ENCODE measurements at regions of chr5 and their contacts with region 1.

Region 1: GRCh38 chr5:14644623-14645237 is 19.8 kb upstream of the OTULIN start:
- DNase-seq: no peak
- ATAC-seq: no peak
- H3K4me3 ChIP-seq: no peak overlapping the region
- H3K4me3 Mint-ChIP-seq: no peak overlapping the region
- H3K27ac ChIP-seq: no peak overlapping the region
- H3K27ac Mint-ChIP-seq: no peak overlapping the region
- H3K4me1 ChIP-seq: no peaks in the 10 kb centered on the region
- H3K4me1 Mint-ChIP-seq: peaks cover 0 to 8% (median 0%) of the 10 kb centered on the region in 7 donors
- H3K27me3 ChIP-seq: no peaks in the 10 kb centered on the region
- H3K27me3 Mint-ChIP-seq: peaks cover 5 to 42% (median 18%) of the 10 kb centered on the region in 5 donors

Region 2: DNA sequence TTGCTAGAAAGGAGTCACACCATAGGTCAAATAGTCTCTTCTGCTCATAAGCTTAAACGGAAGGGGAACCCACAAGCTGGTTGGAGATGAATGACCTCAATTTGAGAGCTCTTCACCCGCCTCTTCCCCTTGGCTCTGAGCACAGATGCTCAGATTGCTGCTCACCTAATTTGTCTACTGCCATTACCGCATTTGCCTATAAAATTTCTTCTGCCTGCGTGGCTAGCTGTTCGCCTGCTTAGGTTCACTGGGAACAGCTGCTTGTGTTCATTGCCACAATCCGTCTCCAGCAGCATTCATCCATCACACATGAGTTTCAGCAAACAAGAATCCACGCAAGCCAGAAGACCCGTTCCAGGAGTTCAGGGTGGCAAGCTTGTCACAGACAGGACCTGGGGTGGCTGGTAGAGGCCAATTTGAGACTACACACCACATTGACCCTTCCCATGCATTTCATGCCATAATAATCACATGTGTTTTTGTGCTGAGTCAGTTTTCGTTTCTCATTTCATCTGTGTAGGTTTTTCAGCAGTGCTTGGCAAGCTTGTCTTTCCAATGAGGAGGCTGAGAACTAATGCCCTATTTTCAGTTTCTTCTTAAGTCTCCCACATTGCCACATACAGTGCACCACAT is 650.0 kb before region 1 on chr5:
- CTCF ChIA-PET with region 1: no interaction called
- POLR2A ChIA-PET with region 1: no interaction called
- intact Hi-C with region 1: loop called in 1 of 2 experiments (anchors 10 kb)
- DNase-seq: no peak
- ATAC-seq: no peak
- H3K4me3 ChIP-seq: no peak overlapping the region
- H3K4me3 Mint-ChIP-seq: no peak overlapping the region
- H3K27ac ChIP-seq: no peak overlapping the region
- H3K27ac Mint-ChIP-seq: peak overlapping the region in 1 of 9 donors; percentile 73
- H3K4me1 ChIP-seq: no peaks in the 10 kb centered on the region
- H3K4me1 Mint-ChIP-seq: no peaks in the 10 kb centered on the region
- H3K27me3 ChIP-seq: no peaks in the 10 kb centered on the region
- H3K27me3 Mint-ChIP-seq: peaks cover 0 to 12% (median 4%) of the 10 kb centered on the region in 5 donors

Region 3: GRCh38 chr5:14351845-14352712 is 292.7 kb before region 1 on chr5:
- CTCF ChIA-PET with region 1: interaction called, 37 read pairs
- POLR2A ChIA-PET with region 1: interaction called, 3 read pairs
- intact Hi-C with region 1: loop called (anchors 1 kb)
- DNase-seq: peak; percentile 22 to 64 (median 50)
- ATAC-seq: peak; percentile 94
- H3K4me3 ChIP-seq: no peak overlapping the region
- H3K4me3 Mint-ChIP-seq: no peak overlapping the region
- H3K27ac ChIP-seq: no peak overlapping the region
- H3K27ac Mint-ChIP-seq: no peak overlapping the region
- H3K4me1 ChIP-seq: no peaks in the 10 kb centered on the region
- H3K4me1 Mint-ChIP-seq: peaks cover 0 to 4% (median 0%) of the 10 kb centered on the region in 7 donors
- H3K27me3 ChIP-seq: no peaks in the 10 kb centered on the region
- H3K27me3 Mint-ChIP-seq: peaks cover 0 to 8% (median 0%) of the 10 kb centered on the region in 5 donors

Region 4: GRCh38 chr5:14399054-14399692 is 245.6 kb before region 1 on chr5:
- CTCF ChIA-PET with region 1: interaction called, 86 read pairs
- POLR2A ChIA-PET with region 1: no interaction called
- intact Hi-C with region 1: loop called (anchors 1 kb)
- DNase-seq: peak in 6 of 9 donors; percentile 26 to 67 (median 53)
- ATAC-seq: peak; percentile 72
- H3K4me3 ChIP-seq: no peak overlapping the region
- H3K4me3 Mint-ChIP-seq: no peak overlapping the region
- H3K27ac ChIP-seq: no peak overlapping the region
- H3K27ac Mint-ChIP-seq: peak overlapping the region in 1 of 9 donors; percentile 7
- H3K4me1 ChIP-seq: no peaks in the 10 kb centered on the region
- H3K4me1 Mint-ChIP-seq: peaks cover 0 to 47% (median 19%) of the 10 kb centered on the region in 7 donors
- H3K27me3 ChIP-seq: no peaks in the 10 kb centered on the region
- H3K27me3 Mint-ChIP-seq: peaks cover 0 to 2% (median 0%) of the 10 kb centered on the region in 5 donors

Region 5: GRCh38 chr5:14656898-14657297 is 12.2 kb after region 1 on chr5:
- CTCF ChIA-PET with region 1: interaction called, 14 read pairs
- POLR2A ChIA-PET with region 1: no interaction called
- intact Hi-C with region 1: no loop called
- DNase-seq: no peak
- ATAC-seq: no peak
- H3K4me3 ChIP-seq: no peak overlapping the region
- H3K4me3 Mint-ChIP-seq: no peak overlapping the region
- H3K27ac ChIP-seq: no peak overlapping the region
- H3K27ac Mint-ChIP-seq: no peak overlapping the region
- H3K4me1 ChIP-seq: no peaks in the 10 kb centered on the region
- H3K4me1 Mint-ChIP-seq: peaks cover 2 to 35% (median 16%) of the 10 kb centered on the region in 7 donors
- H3K27me3 ChIP-seq: no peaks in the 10 kb centered on the region
- H3K27me3 Mint-ChIP-seq: peaks cover 0 to 10% (median 0%) of the 10 kb centered on the region in 5 donors